ENCODE measurements at regions of chr2 and their contacts with region 1.

Region 1: DNA sequence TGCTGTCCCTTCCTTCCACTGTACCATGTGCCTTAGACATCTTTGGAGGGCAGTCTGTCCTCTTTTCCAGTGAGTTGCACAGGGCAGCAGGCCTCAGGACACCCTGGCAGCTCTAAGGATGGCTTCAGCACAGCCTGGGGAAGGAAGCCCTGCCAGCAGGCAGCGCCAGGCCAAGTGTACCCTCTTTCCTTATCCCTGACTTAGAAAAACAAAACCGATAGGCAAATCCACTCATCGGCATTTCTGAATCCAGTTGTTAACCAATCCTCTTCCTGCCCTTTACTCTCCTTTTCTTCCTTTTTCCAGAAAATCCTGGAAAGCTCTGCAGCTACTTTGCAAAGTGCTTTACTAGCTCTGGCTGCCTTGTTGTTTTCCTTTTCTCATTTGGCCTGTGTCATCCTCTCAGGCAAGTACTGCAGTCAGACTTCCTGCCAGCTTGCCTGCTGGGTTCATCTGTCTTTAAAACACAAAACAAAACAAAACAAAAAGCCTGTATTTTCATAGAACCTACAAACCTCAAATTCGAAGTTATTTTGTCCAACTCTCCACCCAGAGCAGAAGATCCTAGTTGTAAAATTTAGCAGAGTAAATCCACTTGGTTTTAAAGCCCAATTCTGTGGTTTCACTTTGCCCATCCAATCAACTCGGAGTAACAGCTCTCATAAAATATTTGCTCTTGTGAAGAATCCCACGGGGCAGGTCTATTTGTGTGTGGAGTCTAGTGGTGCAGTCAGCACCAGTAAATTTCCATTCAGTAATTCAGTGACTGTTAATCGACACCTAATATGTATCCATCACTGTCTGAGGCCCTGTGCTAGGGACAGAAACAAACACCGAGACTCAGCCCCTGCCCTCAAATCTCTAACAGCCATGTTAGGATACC is 45.2 kb downstream of the PCBP1 start:
- DNase-seq: peak; percentile 75

Region 2: GRCh38 chr2:69743847-69744264 is 388.6 kb before region 1 on chr2:
- in situ Hi-C with region 1: no loop called
- DNase-seq: no peak

Region 3: GRCh38 chr2:70086838-70087701 is 45.4 kb before region 1 on chr2 and contains the start of gene PCBP1:
- in situ Hi-C with region 1: loop called (anchors 10 kb)
- DNase-seq: peak; percentile 90

Measured in KBM-7 (cell line).